PC-9 (cell line): ENCODE measurements at regions of chr14 and their contacts with region 1.

Region 1: DNA sequence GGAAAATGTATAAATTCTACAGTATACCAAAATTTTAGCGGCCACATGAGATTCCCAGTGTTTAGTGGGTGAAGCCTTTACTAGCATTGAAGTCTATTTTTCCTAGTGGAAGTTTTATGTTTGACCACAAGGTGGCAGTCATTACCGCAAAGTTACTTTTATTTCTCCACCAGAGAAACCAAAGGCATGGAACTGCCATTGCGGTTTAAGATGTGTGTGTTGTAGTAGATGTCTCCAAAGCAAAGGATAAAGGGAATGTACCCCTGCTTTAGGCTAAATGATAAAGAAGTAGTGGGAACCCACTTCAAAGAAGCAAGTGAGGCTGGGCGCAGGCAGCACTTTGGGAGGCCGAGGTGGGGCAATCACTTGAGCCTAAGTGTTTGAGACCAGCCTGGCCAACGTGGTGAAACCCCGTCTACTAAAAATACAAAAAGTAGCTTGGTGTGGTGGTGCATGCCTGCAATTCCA is 140.5 kb downstream of the PRKCH start:
- DNase-seq: peak; percentile 48 to 70
- H3K4me3 ChIP-seq: no peak overlapping the region
- H3K27ac ChIP-seq: peak overlapping the region; percentile 66
- H3K4me1 ChIP-seq: peaks cover 56% of the 10 kb centered on the region
- H3K27me3 ChIP-seq: no peaks in the 10 kb centered on the region
- CTCF ChIP-seq: peak; percentile 93

Region 2: GRCh38 chr14:61420326-61420725 is 41.5 kb before region 1 on chr14:
- CTCF ChIA-PET with region 1: no interaction called
- POLR2A ChIA-PET with region 1: no interaction called
- intact Hi-C with region 1: no loop called
- DNase-seq: peak; percentile 55 to 88
- H3K4me3 ChIP-seq: no peak overlapping the region
- H3K27ac ChIP-seq: peak overlapping the region; percentile 73
- H3K4me1 ChIP-seq: peaks cover 34% of the 10 kb centered on the region
- H3K27me3 ChIP-seq: no peaks in the 10 kb centered on the region
- CTCF ChIP-seq: no peak

Region 3: DNA sequence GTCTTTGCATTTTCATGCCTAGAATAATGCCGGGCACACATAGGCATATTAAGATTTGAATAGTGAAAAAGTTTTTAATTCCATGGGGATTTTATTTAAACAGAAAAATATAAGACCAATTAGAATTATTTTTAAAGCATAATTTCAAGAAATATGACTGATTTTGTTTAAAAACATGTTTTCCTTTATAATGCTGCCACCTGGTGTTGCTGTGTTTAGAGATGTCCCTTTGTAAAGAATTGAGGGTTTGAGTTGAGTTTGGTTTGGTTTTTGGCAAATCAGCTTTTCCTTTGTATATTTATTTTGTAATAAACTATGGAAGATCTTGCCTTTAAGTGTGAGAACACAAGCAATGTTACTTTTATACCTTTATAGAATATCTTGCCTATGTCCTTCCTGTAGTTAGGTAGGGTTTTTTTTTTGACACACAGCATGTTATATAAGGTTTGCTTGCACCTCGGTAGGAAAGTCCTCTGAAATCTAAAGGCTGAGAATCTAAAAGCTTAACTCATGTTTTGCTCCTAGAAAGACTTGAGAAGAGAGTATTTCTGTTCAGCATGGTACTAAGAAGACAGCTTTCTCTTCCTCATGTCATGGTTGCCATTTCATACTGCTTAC is 269.0 kb after region 1 on chr14:
- CTCF ChIA-PET with region 1: no interaction called
- POLR2A ChIA-PET with region 1: no interaction called
- intact Hi-C with region 1: loop called (anchors 1 kb)
- DNase-seq: no peak
- H3K4me3 ChIP-seq: no peak overlapping the region
- H3K27ac ChIP-seq: peak overlapping the region; percentile 35
- H3K4me1 ChIP-seq: no peaks in the 10 kb centered on the region
- H3K27me3 ChIP-seq: no peaks in the 10 kb centered on the region
- CTCF ChIP-seq: peak; percentile 73

Region 4: DNA sequence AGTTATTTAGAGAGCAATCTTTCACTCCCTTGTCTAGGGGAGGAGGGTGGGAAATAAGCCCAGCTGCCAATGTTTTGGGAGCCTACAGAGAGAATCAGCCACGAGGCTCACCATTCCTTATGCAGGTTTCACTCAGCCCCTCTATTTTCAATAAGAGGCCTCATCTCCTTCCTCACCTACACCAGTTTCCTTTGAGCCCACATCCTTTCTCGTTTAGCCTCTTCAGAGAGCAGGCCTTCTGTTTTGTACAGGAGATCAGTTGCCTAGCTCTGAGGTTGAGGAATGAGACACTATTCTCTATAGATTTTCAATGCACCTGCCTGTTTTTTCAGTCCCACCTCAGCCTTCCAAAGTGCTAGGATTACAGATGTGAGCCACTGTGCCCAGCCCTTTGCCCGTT is 318.3 kb after region 1 on chr14:
- CTCF ChIA-PET with region 1: no interaction called
- POLR2A ChIA-PET with region 1: no interaction called
- intact Hi-C with region 1: no loop called
- DNase-seq: no peak
- H3K4me3 ChIP-seq: no peak overlapping the region
- H3K27ac ChIP-seq: no peak overlapping the region
- H3K4me1 ChIP-seq: no peaks in the 10 kb centered on the region
- H3K27me3 ChIP-seq: no peaks in the 10 kb centered on the region
- CTCF ChIP-seq: no peak